Calu3 (cell line): ENCODE measurements at regions of chr1 and their contacts with region 1.

Region 1: GRCh38 chr1:1164701-1165451 is 8.8 kb upstream of the TTLL10 start:
- DNase-seq: peak; percentile 66
- H3K4me3 Mint-ChIP-seq: peak overlapping the region; percentile 96
- H3K27ac Mint-ChIP-seq: peak overlapping the region; percentile 92
- H3K4me1 Mint-ChIP-seq: peaks cover 9% of the 10 kb centered on the region
- H3K27me3 Mint-ChIP-seq: no peaks in the 10 kb centered on the region
- CTCF ChIP-seq: no peak

Region 2: GRCh38 chr1:1231400-1232223 is 66.7 kb after region 1 on chr1 and contains the start of gene SDF4:
- CTCF ChIA-PET with region 1: no interaction called
- intact Hi-C with region 1: loop called (anchors 10 kb)
- DNase-seq: peak; percentile 94
- H3K4me3 Mint-ChIP-seq: peak within 1 kb of the TSS; percentile 79
- H3K27ac Mint-ChIP-seq: peak within 1 kb of the TSS; percentile 85
- H3K4me1 Mint-ChIP-seq: peaks cover 16% of the 10 kb centered on the region
- H3K27me3 Mint-ChIP-seq: no peaks in the 10 kb centered on the region
- CTCF ChIP-seq: no peak
- total RNA-seq, gene SDF4: 128 and 161 TPM in 2 replicates